ENCODE measurements at regions of chr12 and their contacts with region 1.

Region 1: DNA sequence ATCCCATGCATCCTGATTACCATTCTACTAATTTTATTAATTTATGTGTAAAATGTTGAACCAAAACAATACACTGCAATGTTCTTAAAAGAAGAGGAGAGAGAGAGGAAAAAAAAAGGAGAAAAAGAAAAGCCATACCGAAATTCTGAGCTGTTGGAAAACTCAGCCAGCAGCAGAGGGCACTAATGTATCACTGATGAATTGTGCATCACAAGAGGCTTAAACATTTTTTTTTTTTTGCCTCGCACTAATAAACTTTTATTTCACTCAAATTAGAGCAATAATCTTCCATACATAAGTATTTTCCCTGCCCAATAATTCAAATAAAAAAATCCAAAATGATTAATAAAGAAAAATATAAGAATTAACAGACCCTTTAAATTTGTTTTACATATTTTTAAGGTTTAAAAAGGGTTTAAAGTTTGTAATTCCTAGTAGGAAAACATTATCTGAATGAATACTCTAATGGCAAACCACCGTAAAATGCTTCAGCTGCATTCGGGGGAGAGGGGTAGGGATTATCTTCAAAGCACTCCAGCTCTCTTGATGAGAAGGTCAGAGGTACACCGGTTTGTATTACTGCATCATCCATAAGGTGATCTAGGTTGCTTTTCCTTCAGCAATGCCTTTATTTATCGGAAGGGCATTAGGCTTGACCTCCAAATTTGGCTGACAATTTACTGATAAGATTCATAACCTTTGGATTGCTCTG is 41.9 kb downstream of the ATP23 start:
- DNase-seq: peak; percentile 28
- H3K4me3 ChIP-seq: no peak overlapping the region
- H3K27ac ChIP-seq: no peak overlapping the region
- H3K4me1 ChIP-seq: no peaks in the 10 kb centered on the region
- H3K27me3 ChIP-seq: no peaks in the 10 kb centered on the region
- CTCF ChIP-seq: peak; percentile 60 to 70

Region 2: DNA sequence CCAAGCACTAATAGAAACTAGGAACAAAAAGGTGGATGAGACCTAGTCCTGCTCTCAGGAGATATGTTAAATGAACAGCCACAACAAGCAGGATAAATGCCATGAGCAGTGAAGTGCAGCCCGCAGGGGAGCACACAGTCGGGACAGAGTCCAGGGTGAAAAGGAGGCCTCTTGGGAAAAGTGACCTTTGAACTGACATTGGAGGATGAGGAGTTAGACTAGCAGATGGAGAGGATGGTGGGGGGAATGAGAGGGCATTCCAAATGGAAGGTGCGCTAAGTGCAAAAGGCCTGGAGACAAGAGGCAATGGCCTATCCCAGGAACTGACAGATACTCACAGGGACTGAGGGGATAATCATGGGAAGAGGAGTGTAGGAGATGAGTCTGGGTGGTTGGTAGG is 284.9 kb before region 1 on chr12:
- CTCF ChIA-PET with region 1: no interaction called
- dilution Hi-C with region 1: no loop called
- in situ Hi-C with region 1: no loop called
- intact Hi-C with region 1: no loop called
- DNase-seq: no peak
- H3K4me3 ChIP-seq: no peak overlapping the region
- H3K27ac ChIP-seq: no peak overlapping the region
- H3K4me1 ChIP-seq: peaks cover 8% of the 10 kb centered on the region
- H3K27me3 ChIP-seq: no peaks in the 10 kb centered on the region
- CTCF ChIP-seq: no peak

Region 3: GRCh38 chr12:58176296-58176869 is 193.1 kb after region 1 on chr12:
- CTCF ChIA-PET with region 1: no interaction called
- dilution Hi-C with region 1: no loop called
- in situ Hi-C with region 1: no loop called
- intact Hi-C with region 1: loop called (anchors 10 kb)
- DNase-seq: peak; percentile 6
- H3K4me3 ChIP-seq: no peak overlapping the region
- H3K27ac ChIP-seq: no peak overlapping the region
- H3K4me1 ChIP-seq: no peaks in the 10 kb centered on the region
- H3K27me3 ChIP-seq: no peaks in the 10 kb centered on the region
- CTCF ChIP-seq: peak; percentile 46 to 53

Region 4: GRCh38 chr12:58247638-58248037 is 264.3 kb after region 1 on chr12:
- CTCF ChIA-PET with region 1: no interaction called
- dilution Hi-C with region 1: no loop called
- in situ Hi-C with region 1: no loop called
- intact Hi-C with region 1: no loop called
- DNase-seq: no peak
- H3K4me3 ChIP-seq: no peak overlapping the region
- H3K27ac ChIP-seq: no peak overlapping the region
- H3K4me1 ChIP-seq: no peaks in the 10 kb centered on the region
- H3K27me3 ChIP-seq: no peaks in the 10 kb centered on the region
- CTCF ChIP-seq: no peak

Region 5: DNA sequence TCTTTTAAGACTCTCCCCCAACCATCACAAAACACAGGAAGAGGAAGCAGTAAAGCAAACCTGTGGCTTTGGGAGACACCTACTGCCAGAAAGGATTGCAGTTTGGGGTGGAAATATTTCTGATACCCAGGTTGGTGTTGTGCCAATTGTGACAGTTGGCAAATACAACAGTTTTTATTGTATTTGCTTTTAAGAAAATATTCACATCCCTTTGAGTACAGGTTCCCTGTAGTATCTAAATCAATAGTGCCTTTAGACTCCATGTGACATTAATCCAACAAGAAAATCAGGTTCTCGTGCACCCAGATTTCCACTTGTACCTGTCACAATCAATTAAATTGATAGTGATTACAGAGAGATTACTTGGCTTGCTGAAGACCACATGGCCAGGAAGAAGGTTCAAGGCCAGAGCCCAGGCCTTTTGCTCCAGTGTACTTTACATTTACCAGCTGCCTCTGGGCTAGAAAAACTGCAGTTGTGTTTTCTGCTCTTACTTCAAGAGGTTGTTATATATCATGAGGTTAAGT is 319.2 kb after region 1 on chr12:
- CTCF ChIA-PET with region 1: no interaction called
- dilution Hi-C with region 1: no loop called
- in situ Hi-C with region 1: loop called in 1 of 2 experiments (anchors 25 kb)
- intact Hi-C with region 1: loop called (anchors 1 kb)
- DNase-seq: peak; percentile 9
- H3K4me3 ChIP-seq: no peak overlapping the region
- H3K27ac ChIP-seq: no peak overlapping the region
- H3K4me1 ChIP-seq: peaks cover 3% of the 10 kb centered on the region
- H3K27me3 ChIP-seq: no peaks in the 10 kb centered on the region
- CTCF ChIP-seq: peak in 1 of 2 donors; percentile 35

Region 6: DNA sequence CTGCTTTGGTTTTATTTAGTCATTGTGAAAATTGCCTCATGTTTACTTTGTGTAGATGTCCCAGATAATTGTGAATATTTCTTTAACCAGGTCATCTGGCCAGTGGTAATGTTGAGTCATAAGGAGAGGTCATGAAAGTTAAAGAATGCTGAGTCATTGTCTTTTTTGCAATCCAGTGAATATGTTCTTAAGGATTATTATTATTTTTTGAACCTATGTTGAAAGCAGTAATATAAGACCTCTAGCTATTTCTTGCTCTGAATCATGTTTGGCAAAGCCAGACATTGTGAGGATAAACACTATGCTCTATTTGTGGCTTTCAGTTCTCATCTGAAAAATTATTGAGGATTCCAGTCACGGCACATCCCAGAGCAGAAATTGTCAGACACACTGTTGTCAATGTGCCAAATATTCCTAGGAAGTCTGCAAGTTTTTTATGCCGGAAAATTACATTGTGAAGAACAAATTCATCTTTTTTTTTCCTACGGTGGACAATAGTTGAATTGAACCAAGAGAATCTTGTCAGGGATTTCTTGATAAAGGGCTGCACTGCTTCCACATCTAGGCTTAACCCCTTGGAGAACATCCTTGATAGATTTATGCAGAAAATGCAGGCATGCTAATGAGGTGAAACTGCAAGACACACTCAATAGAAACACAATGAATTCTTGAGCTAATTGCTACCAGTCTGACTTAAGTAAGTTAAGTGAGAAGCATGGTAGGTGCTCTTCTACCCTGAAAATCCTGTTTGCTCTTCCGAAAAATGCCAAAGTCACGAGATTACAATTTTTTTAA is 327.7 kb after region 1 on chr12:
- CTCF ChIA-PET with region 1: no interaction called
- dilution Hi-C with region 1: no loop called
- in situ Hi-C with region 1: loop called in 1 of 2 experiments (anchors 25 kb)
- intact Hi-C with region 1: no loop called
- DNase-seq: peak; percentile 97
- H3K4me3 ChIP-seq: no peak overlapping the region
- H3K27ac ChIP-seq: peak overlapping the region; percentile 84
- H3K4me1 ChIP-seq: peaks cover 40% of the 10 kb centered on the region
- H3K27me3 ChIP-seq: no peaks in the 10 kb centered on the region
- CTCF ChIP-seq: no peak

Region 7: GRCh38 chr12:58346032-58346632 is 362.8 kb after region 1 on chr12:
- CTCF ChIA-PET with region 1: interaction called, 3 read pairs
- dilution Hi-C with region 1: no loop called
- in situ Hi-C with region 1: loop called in 1 of 2 experiments (anchors 25 kb)
- intact Hi-C with region 1: loop called (anchors 1 kb)
- DNase-seq: peak; percentile 26
- H3K4me3 ChIP-seq: no peak overlapping the region
- H3K27ac ChIP-seq: no peak overlapping the region
- H3K4me1 ChIP-seq: no peaks in the 10 kb centered on the region
- H3K27me3 ChIP-seq: no peaks in the 10 kb centered on the region
- CTCF ChIP-seq: peak; percentile 73 to 77

Region 8: DNA sequence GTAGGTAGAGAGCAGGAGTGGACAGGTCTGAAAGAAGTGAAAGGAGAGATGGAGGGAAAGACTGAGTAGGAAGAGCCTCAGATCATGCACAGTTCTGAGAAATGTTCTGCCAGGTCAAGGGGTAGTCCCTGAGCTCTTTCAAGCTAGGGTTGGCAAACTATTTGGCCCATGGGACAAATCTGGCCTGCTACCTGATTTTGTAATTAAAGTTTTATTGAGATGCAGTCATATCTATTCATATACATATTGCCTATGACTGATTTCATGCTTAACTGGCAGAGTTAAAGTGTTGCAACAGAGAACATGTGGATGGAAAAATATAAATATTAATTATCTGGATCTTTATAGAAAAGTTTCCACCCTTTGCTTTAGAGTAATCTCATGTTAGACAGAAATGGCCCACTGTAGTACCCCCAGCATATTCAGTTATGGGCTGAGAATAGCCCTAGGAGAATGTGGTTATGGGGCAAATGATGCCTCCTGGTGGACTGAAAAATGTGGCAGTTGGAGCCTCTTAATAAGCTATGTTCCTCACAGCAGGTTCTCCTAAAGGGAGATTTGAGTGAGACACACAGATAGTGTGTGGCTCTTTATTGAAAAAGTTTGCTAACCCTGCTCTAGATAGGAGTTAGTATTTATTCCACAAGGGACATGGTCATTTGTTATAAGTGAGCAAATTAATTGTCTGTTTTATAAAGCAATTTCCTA is 460.1 kb after region 1 on chr12:
- CTCF ChIA-PET with region 1: no interaction called
- dilution Hi-C with region 1: no loop called
- in situ Hi-C with region 1: no loop called
- intact Hi-C with region 1: loop called (anchors 2 kb)
- DNase-seq: peak; percentile 35
- H3K4me3 ChIP-seq: no peak overlapping the region
- H3K27ac ChIP-seq: no peak overlapping the region
- H3K4me1 ChIP-seq: no peaks in the 10 kb centered on the region
- H3K27me3 ChIP-seq: no peaks in the 10 kb centered on the region
- CTCF ChIP-seq: peak; percentile 63 to 72

Region 9: DNA sequence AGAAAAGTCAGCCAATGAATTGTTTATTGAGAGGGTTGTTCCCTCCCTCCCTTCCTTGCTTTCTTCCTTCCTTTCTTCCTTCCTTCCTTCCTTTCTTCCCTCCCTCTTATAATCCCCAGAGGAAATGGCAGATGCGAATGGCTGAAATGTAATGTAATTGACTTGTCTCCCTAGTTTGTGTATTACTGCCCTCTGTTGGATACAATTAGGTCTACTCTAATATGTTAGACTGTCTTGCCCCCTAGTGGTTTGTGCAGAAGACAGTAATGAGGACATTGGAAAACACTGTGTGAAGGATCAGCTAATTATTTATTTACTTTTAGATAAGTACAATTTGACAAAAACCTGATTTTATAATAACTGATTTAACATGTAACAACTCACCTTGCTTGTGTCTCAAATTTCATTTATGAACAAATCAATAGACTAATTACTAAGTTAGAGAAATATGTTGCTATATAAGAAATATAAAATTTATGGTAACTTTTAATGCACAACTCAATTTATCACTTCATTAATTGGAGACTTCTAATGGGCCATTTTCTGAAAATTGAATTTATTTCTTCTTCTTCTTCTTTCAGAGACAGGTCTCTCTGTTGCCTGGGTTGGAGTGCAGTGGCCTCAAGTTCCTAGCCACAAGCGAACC is 1166.8 kb after region 1 on chr12:
- CTCF ChIA-PET with region 1: no interaction called
- dilution Hi-C with region 1: no loop called
- in situ Hi-C with region 1: loop called (anchors 25 kb)
- intact Hi-C with region 1: loop called (anchors 1 kb)
- DNase-seq: peak; percentile 68
- H3K4me3 ChIP-seq: no peak overlapping the region
- H3K27ac ChIP-seq: no peak overlapping the region
- H3K4me1 ChIP-seq: no peaks in the 10 kb centered on the region
- H3K27me3 ChIP-seq: no peaks in the 10 kb centered on the region
- CTCF ChIP-seq: peak; percentile 98 to 99

Measured in mammary epithelial cell (primary cell).